ENCODE measurements at regions of chr3 and their contacts with region 1.

Region 1: DNA sequence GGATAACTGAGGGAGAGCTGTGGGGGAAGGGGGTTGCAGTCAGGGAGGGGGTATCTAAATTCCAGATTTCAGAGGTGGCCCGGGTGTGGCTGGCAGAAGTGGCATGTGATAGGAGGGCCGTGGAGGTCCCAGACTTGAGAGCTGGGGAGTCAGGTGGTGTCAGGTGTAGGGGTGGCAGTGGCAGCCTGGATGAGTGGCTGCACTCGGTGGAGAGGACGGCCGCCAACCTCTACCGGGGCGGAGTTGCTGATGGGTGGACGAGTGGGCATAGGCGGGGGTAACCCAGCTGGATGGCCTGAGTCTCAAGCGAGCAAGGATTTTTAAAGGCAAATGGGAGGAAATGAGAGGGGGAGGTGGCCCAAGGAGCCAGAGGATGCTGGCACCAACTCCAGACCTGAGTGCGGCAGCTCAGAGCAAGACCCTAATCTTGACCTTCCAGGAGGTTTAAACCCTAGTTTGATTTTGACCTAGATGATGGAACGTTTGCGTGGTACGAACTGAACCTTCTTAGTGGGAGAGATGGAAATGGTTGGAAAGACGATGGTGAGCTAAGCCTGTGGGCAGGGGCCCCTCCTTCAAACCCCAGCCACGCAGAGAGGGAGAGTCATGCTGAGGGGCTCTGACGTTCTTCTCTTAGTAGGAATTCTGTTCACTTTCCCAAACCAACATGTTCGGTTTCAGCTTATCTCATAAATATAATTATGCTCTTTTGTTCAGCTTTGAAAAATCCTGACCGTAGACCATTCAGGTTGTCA is 8.0 kb downstream of the TRAK1 start:
- DNase-seq: peak in 1 of 2 donors; percentile 63
- H3K4me3 ChIP-seq: no peak overlapping the region
- H3K27ac ChIP-seq: peak overlapping the region in 1 of 2 donors; percentile 42
- H3K4me1 ChIP-seq: peaks cover 10 to 41% of the 10 kb centered on the region in 2 donors
- H3K27me3 ChIP-seq: no peaks in the 10 kb centered on the region
- CTCF ChIP-seq: no peak

Region 2: GRCh38 chr3:41893977-41894376 is 205.2 kb before region 1 on chr3:
- intact Hi-C with region 1: loop called (anchors 1 kb)
- DNase-seq: no peak
- H3K4me3 ChIP-seq: no peak overlapping the region
- H3K27ac ChIP-seq: no peak overlapping the region
- H3K4me1 ChIP-seq: no peaks in the 10 kb centered on the region
- H3K27me3 ChIP-seq: no peaks in the 10 kb centered on the region
- CTCF ChIP-seq: peak; percentile 37 to 54 (median 43)

Region 3: DNA sequence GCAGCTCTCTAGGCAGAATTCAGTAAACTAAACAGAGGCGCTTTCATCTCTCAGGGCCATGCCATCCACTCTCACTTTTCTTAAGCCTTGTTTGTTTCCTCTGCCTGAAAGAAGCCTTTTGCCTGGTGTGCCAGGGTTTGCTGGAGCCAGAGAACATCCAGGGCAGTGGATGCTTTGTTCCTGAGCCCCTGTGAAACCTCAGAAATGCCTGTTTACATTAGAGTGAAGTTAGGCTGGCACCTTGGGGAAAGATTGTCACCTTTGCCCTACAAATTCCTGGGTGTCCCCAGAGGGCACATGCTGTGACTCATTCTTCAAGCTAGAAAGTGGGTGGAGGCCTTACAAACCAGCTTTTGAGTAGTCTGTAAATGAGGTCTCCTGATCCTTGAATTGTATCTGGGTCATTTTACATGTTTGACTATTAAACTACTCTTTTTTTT is 18.7 kb before region 1 on chr3:
- intact Hi-C with region 1: loop called (anchors 2 kb)
- DNase-seq: peak in 1 of 2 donors; percentile 84
- H3K4me3 ChIP-seq: no peak overlapping the region
- H3K27ac ChIP-seq: peak overlapping the region; percentile 73 to 80
- H3K4me1 ChIP-seq: peaks cover 8 to 31% of the 10 kb centered on the region in 2 donors
- H3K27me3 ChIP-seq: no peaks in the 10 kb centered on the region
- CTCF ChIP-seq: no peak

Measured in ascending aorta (tissue), 2 donors.